ENCODE measurements at regions of chr12 and their contacts with region 1.

Region 1: DNA sequence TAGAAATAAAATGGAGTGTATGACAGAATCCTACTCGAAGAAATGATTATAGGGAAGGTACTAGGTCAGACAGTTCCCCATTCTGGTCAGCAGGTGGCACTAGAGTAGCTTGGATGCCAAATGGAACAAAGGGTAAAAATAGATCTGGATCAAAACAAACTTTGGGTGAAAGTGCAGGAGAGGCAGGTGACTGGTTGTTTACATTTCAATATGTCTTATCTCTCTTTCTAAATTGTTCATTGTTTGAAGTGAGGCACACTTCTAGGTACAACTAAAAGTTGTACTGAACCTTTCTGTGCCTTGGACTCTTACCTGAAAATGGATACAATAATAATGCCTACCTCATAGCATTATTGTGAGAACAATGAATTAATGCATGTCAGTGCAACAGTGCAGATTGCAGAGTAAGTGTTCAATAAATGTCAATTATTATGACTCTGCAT is 62.0 kb upstream of the OSBPL8 start:
- DNase-seq: peak; percentile 61
- ATAC-seq: peak; percentile 81
- H3K4me3 Mint-ChIP-seq: no peak overlapping the region
- H3K27ac Mint-ChIP-seq: no peak overlapping the region; the same call in 1 of the 2 replicates
- H3K4me1 Mint-ChIP-seq: peaks cover 8% of the 10 kb centered on the region; the same call in 1 of the 2 replicates
- H3K27me3 Mint-ChIP-seq: no peaks in the 10 kb centered on the region
- CTCF ChIP-seq: peak; percentile 71

Region 2: DNA sequence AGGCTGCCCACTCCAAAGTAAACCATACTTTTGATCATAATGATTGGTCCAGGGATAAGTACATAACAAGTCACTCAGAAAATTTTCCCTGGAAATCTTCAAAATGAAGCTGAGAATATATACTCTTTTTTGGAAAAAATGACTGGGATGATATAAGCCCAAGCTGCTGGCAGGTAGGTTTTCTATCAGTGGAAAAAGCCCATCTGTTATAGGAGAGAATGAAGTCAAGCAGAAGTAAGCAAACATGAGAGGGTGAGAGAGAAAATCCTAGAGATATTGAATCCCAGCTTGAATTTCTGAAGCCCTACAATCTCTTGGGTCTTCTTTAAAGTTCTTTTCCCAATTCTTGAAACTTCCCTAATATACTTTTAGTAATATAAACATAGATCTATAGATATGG is 105.0 kb after region 1 on chr12:
- CTCF ChIA-PET with region 1: no interaction called
- POLR2A ChIA-PET with region 1: no interaction called
- DNase-seq: no peak
- ATAC-seq: no peak
- H3K4me3 Mint-ChIP-seq: no peak overlapping the region
- H3K27ac Mint-ChIP-seq: no peak overlapping the region
- H3K4me1 Mint-ChIP-seq: no peaks in the 10 kb centered on the region
- H3K27me3 Mint-ChIP-seq: no peaks in the 10 kb centered on the region
- CTCF ChIP-seq: no peak

Region 3: GRCh38 chr12:76820888-76821482 is 199.4 kb after region 1 on chr12:
- CTCF ChIA-PET with region 1: interaction called, 20 read pairs
- POLR2A ChIA-PET with region 1: interaction called, 3 read pairs
- DNase-seq: peak; percentile 49
- ATAC-seq: peak; percentile 62
- H3K4me3 Mint-ChIP-seq: no peak overlapping the region
- H3K27ac Mint-ChIP-seq: no peak overlapping the region
- H3K4me1 Mint-ChIP-seq: no peaks in the 10 kb centered on the region
- H3K27me3 Mint-ChIP-seq: no peaks in the 10 kb centered on the region
- CTCF ChIP-seq: no peak

Measured in WTC11 (cell line).